SK-N-SH (cell line): ENCODE measurements at regions of chr17 and their contacts with region 1.

Region 1: DNA sequence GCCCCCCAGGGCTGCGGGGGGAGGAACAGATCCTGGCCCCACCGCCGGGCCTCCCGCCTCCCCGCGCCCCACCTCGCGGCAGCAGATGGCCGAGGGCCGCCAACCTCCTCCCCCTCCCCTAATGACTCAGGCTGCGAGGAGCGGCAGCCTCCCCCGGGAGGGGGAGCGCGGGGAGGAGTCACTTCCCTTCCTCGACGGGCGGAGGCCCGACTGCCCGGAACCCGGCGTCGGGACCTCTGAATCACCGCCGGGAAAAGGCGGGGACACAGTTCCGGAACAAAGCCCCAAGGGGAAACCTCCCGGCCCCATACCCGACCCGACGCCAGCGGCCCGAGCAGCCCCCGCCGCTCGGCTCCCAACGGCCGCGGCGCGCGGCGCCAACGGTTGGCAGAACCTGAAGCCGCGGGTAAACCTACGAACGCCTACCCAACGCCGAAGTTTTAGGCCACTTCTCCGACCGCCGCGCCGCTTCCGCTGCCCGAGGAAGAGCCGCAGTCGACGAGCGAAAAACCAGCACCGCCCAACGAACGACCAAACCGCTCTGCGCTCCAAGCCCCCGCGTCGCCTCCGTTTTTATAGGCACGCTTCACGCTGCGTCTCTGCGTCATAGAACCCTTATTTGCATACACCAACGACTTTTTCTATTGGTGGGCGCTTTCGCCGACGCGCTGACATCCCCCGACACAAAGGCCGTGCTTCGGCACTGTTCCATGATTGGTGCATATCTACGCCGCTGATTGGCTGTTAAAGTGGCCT is 5.2 kb upstream of the UNK start:
- DNase-seq: peak; percentile 95
- H3K4me3 ChIP-seq: peak overlapping the region; percentile 90 to 94
- H3K27ac ChIP-seq: peak overlapping the region; percentile 97
- H3K4me1 ChIP-seq: peaks cover 18 to 25% of the 10 kb centered on the region in 2 experiments
- H3K27me3 ChIP-seq: no peaks in the 10 kb centered on the region
- CTCF ChIP-seq: 0 out of 2 replicates have a peak, but pooled peaks have one; percentile 7
- EP300 ChIP-seq: 0 out of 4 replicates have a peak, but pooled peaks of 1 of the 2 experiments have one; percentile 23
- RAD21 ChIP-seq: no peak

Region 2: DNA sequence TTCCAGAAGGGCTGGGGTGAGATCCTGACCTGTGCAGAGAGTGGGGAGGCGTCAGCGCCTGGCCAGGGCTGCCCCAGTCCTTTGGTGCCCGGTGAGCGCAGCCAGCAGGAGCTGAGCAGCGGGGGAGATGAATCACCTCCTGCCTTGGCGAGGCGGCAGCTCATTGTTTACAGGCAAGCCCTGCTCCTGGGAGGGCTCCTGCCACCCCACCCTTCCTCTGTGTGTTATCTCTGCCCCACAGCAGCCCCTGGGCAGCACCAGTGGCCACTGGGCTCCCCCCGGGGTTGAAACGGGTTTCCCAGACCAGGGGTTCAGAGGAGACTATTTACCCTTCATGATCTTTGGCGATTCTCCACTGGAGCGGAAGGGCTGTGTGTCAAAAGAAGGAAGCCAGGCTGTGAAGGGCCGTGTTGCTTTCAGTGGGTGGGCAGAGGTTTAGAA is 72.3 kb before region 1 on chr17:
- CTCF ChIA-PET with region 1: no interaction called
- POLR2A ChIA-PET with region 1: no interaction called
- DNase-seq: no peak
- H3K4me3 ChIP-seq: no peak overlapping the region
- H3K27ac ChIP-seq: peak overlapping the region in 1 of 2 experiments; percentile 7; a peak in 2 of 4 replicates
- H3K4me1 ChIP-seq: peaks cover 0 to 17% of the 10 kb centered on the region in 2 experiments; a peak in 2 of 4 replicates
- H3K27me3 ChIP-seq: no peaks in the 10 kb centered on the region
- CTCF ChIP-seq: no peak
- EP300 ChIP-seq: peak in 1 of 2 experiments; percentile 54; a peak in 1 of 4 replicates
- RAD21 ChIP-seq: no peak

Region 3: DNA sequence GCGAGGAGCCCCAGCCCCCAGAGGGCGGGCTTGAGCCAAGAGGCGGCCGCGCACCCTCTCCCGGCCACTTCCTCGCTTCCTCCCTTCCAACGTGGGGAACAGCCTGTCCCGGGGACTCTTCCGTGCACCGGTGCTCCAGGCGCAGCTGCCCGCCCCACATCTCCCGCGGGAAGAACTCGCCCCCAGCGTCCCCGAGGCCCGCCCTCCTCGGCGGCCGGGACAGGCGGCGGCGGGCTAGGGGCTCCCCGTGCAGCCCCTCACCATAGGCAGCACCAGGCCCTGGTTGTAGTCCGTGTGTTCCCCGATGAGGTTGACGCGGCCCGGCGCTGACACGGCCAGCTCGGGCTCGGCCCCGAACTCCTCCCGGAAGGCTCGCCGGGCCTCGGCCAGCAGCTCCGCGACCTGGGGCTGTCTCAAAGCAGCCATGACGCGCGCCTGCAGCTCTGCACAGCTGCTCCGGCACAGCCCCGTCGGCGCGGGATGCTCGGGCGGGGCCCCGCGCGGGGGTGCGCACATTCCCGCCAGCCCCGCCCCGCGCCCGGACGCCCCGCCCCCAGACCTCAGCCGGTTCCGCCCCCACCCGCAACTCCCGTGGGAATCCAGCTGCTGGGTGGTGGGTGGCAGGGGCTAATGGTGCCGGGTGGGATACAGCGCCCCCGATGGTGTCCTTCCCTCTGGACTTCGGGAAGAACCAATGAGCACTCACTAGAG is 14.5 kb before region 1 on chr17 and contains the start of gene GALK1:
- CTCF ChIA-PET with region 1: interaction called, 121 read pairs
- POLR2A ChIA-PET with region 1: interaction called, 161 read pairs
- DNase-seq: peak; percentile 98
- H3K4me3 ChIP-seq: peak within 1 kb of the TSS; percentile 58 to 92
- H3K27ac ChIP-seq: peak within 1 kb of the TSS; percentile 33 to 44; a peak in 3 of 4 replicates
- H3K4me1 ChIP-seq: peaks cover 8 to 19% of the 10 kb centered on the region in 2 experiments; a peak in 2 of 4 replicates
- H3K27me3 ChIP-seq: no peaks in the 10 kb centered on the region
- CTCF ChIP-seq: peak; percentile 38
- EP300 ChIP-seq: no peak
- RAD21 ChIP-seq: peak; percentile 49
- polyA plus RNA-seq, gene GALK1: 36.5 and 39.2 TPM in 2 replicates

Region 4: GRCh38 chr17:75808905-75809715 is 29.7 kb after region 1 on chr17:
- CTCF ChIA-PET with region 1: interaction called, 7 read pairs
- POLR2A ChIA-PET with region 1: interaction called, 12 read pairs
- DNase-seq: peak; percentile 27
- H3K4me3 ChIP-seq: no peak overlapping the region
- H3K27ac ChIP-seq: peak overlapping the region in 1 of 2 experiments; percentile 30; a peak in 1 of 4 replicates
- H3K4me1 ChIP-seq: peaks cover 0 to 6% of the 10 kb centered on the region in 2 experiments; a peak in 1 of 4 replicates
- H3K27me3 ChIP-seq: no peaks in the 10 kb centered on the region
- CTCF ChIP-seq: no peak
- EP300 ChIP-seq: no peak
- RAD21 ChIP-seq: no peak

Region 5: GRCh38 chr17:75845049-75845860 is 65.8 kb after region 1 on chr17:
- CTCF ChIA-PET with region 1: interaction called, 13 read pairs
- POLR2A ChIA-PET with region 1: interaction called, 38 read pairs
- DNase-seq: peak; percentile 93
- H3K4me3 ChIP-seq: no peak overlapping the region
- H3K27ac ChIP-seq: peak overlapping the region in 1 of 2 experiments; percentile 93; a peak in 2 of 4 replicates
- H3K4me1 ChIP-seq: peaks cover 4 to 34% of the 10 kb centered on the region in 2 experiments; a peak in 3 of 4 replicates
- H3K27me3 ChIP-seq: no peaks in the 10 kb centered on the region
- CTCF ChIP-seq: peak; percentile 70
- EP300 ChIP-seq: peak in 1 of 2 experiments; percentile 55; a peak in 1 of 4 replicates
- RAD21 ChIP-seq: peak; percentile 44